Tibial artery (tissue), 4 donors: ENCODE measurements at regions of chr10 and their contacts with region 1.

Region 1: DNA sequence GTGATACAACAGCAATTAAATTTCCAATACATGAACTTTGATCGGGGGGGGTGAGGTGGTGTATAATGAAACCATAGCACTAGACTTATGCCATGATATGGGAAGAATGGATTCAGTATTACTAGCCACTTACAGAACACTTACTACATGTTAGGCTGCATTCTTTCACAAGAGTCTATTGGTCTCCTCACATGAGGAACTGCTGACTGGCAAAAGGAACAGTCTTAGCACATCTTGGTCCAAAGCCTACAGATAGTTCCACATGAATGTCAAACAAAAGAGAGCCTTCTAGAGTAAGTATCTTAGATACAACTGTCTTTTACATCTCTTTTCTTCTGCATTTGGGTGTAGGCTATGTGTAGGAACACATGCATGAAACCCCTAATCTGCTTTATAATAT is 115.9 kb upstream of the DNAJB12 start:
- DNase-seq: no peak
- H3K4me3 ChIP-seq: no peak overlapping the region
- H3K27ac ChIP-seq: no peak overlapping the region
- H3K4me1 ChIP-seq: no peaks in the 10 kb centered on the region
- H3K27me3 ChIP-seq: no peaks in the 10 kb centered on the region
- CTCF ChIP-seq: no peak

Region 2: GRCh38 chr10:72186258-72186981 is 284.2 kb before region 1 on chr10:
- intact Hi-C with region 1: loop called (anchors 5 kb)
- DNase-seq: peak in 1 of 2 donors; percentile 54
- H3K4me3 ChIP-seq: no peak overlapping the region
- H3K27ac ChIP-seq: peak overlapping the region; percentile 47 to 53
- H3K4me1 ChIP-seq: peaks cover 0 to 4% (median 0%) of the 10 kb centered on the region in 4 donors
- H3K27me3 ChIP-seq: no peaks in the 10 kb centered on the region
- CTCF ChIP-seq: no peak

Region 3: DNA sequence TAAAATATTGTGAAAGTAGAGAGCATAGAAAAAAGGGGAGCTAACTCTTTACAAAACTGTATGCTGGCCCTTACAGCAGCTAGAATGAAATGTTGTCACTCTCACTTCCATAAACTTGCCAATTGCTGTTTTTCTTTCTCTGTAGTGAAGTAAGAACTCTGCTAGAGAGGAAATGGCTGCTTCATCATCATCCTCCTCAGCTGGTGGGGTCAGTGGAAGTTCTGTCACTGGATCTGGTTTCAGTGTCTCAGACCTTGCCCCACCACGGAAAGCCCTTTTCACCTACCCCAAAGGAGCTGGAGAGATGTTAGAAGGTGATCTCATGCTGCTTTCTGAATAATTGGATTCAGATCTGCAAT is 246.9 kb before region 1 on chr10:
- intact Hi-C with region 1: no loop called
- DNase-seq: peak; percentile 51 to 70
- H3K4me3 ChIP-seq: no peak overlapping the region
- H3K27ac ChIP-seq: peak overlapping the region; percentile 79 to 92
- H3K4me1 ChIP-seq: peaks cover 0 to 88% (median 36%) of the 10 kb centered on the region in 4 donors
- H3K27me3 ChIP-seq: no peaks in the 10 kb centered on the region
- CTCF ChIP-seq: no peak

Region 4: DNA sequence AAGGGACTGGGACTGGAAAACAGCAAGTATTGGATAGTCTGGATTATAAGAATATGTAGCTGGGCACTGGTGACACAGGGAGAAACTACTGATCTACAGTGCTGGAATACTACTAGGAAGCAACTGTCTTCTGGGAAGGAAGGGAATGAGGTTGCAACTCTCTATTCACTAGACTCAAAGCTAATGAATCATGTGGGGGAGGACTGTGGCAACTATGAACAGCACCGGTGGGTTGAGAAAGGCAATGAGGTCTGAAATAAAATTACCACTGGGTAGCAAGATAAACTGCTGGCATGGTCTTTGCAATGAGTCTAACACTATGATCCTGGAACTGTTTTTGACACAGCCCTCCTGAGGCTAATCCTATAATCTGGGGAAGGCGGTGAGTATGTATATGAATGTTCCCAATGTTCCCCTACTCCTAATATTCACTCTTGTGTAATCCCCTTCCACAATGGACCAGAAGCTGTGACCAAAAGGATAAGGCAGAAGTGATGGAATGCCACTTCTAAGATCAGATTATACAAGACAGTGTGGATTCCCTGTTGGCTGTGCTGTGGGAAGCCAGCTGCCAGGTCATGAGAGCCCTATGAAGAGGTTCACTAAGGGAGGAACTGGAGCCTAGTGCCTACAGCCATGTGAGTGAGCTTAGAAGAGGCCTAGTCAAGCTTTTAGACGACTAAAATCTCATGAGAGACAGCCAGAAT is 14.6 kb before region 1 on chr10:
- intact Hi-C with region 1: no loop called
- DNase-seq: no peak
- H3K4me3 ChIP-seq: no peak overlapping the region
- H3K27ac ChIP-seq: no peak overlapping the region
- H3K4me1 ChIP-seq: no peaks in the 10 kb centered on the region
- H3K27me3 ChIP-seq: no peaks in the 10 kb centered on the region
- CTCF ChIP-seq: no peak